Heart right ventricle (tissue), 16 donors: ENCODE measurements at regions of chr1 and their contacts with region 1.

Region 1: GRCh38 chr1:179183857-179184256 is 45.6 kb downstream of the ABL2 start:
- DNase-seq: no peak
- ATAC-seq: no peak
- H3K4me3 ChIP-seq: no peak overlapping the region
- H3K27ac ChIP-seq: no peak overlapping the region
- H3K4me1 ChIP-seq: peaks cover 0 to 13% (median 4%) of the 10 kb centered on the region in 9 donors
- H3K27me3 ChIP-seq: no peaks in the 10 kb centered on the region
- CTCF ChIP-seq: no peak

Region 2: DNA sequence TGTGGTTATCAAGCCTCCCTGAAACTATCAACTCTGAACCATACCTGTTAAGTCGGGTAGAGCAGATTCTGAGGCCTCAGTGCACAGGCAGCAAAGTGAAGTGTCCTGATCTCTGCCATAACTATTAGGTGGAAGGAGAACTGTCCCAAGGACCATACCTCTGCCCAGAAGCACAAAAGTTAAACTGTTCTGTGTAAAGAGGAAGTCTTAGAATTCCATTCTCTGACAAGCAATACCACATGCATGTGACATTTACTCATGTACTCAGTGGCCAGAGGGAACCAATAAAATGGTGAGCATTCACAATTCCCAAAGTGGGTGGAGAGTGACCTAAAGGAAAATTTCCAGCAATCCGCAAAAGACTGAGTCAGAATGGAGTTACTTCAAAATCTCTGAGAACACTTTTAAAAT is 41.0 kb before region 1 on chr1:
- intact Hi-C with region 1: loop called in 1 of 10 experiments (anchors 5 kb)
- DNase-seq: no peak
- ATAC-seq: peak in 6 of 8 donors; percentile 34 to 82 (median 81)
- H3K4me3 ChIP-seq: peak overlapping the region in 3 of 10 donors; percentile 13 to 45 (median 15)
- H3K27ac ChIP-seq: peak overlapping the region in 8 of 10 donors; percentile 8 to 73 (median 46)
- H3K4me1 ChIP-seq: peaks cover 0 to 55% (median 4%) of the 10 kb centered on the region in 9 donors
- H3K27me3 ChIP-seq: no peaks in the 10 kb centered on the region
- CTCF ChIP-seq: no peak

Region 3: DNA sequence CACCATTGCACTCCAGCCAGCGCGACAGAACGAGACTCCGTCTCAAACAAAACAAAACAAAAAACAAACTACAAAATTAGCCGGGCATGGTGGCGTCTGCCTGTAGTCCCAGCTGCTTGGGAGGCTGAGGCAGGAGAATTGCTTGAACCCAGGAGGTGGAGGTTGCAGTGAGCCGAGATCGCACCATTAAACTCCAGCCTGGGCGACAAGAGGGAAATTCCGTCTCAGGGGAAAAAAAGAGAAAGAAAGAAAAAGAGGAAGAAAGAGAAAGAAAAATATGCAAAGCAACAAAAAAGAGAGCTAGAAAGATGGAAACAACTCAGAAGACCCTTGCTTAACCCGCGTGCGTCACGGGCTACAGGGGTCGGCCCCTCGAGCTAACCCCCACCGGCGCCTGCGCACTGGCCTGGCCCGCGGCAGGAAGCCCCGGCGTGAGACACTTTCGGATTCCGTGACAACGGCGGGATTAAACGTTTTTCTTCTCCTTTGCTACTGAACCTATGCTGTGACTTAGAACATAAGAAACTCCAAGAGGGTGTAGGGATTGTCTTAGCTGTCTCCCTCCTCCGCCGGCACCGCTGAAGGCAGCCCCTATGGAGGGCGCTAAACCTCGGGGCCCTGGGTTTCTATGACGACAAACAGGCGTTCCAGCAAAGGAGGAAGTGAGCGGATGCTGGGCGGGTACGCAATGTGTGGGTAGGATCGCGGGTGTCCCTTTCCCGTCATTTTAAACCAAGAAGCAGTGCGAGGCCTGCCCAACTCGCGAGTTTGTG is 181.6 kb after region 1 on chr1 and contains the start of gene AXDND1:
- intact Hi-C with region 1: no loop called
- DNase-seq: peak; percentile 86 to 90
- ATAC-seq: peak; percentile 95 to 98 (median 97)
- H3K4me3 ChIP-seq: peak within 1 kb of the TSS; percentile 60 to 79 (median 70)
- H3K27ac ChIP-seq: peak within 1 kb of the TSS; percentile 83 to 96 (median 88)
- H3K4me1 ChIP-seq: peaks cover 0 to 12% (median 0%) of the 10 kb centered on the region in 9 donors
- H3K27me3 ChIP-seq: no peaks in the 10 kb centered on the region
- CTCF ChIP-seq: peak in 3 of 9 donors; percentile 30 to 60 (median 32)
- total RNA-seq, gene AXDND1: 0.12 to 0.17 (median 0.17) TPM in 3 of 10 donors, not detected in the others